Keratinocyte (primary cell): ENCODE measurements at regions of chr5 and their contacts with region 1.

Region 1: DNA sequence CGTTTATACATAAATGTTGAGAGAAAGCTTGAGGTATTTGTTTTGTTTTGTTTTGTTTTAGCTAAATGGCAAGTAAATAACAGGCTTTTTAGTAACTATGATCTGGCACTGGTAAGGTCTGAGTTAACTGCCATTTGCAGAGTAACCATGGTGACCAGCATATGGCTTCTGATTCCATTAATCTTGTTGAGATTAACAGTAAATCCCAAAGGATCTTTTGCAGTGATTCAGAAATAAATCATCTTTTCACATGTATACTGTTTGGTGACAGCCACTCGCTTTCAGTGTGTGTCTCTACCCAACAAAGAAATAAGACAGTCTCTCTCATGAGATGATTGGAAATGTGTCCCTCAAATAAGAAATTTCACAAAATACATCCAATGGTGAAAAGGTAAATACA is 235.6 kb downstream of the RAB3C start:
- DNase-seq: no peak
- H3K4me3 ChIP-seq: no peak overlapping the region
- H3K27ac ChIP-seq: no peak overlapping the region
- H3K4me1 ChIP-seq: no peaks in the 10 kb centered on the region
- H3K27me3 ChIP-seq: no peaks in the 10 kb centered on the region
- CTCF ChIP-seq: no peak

Region 2: DNA sequence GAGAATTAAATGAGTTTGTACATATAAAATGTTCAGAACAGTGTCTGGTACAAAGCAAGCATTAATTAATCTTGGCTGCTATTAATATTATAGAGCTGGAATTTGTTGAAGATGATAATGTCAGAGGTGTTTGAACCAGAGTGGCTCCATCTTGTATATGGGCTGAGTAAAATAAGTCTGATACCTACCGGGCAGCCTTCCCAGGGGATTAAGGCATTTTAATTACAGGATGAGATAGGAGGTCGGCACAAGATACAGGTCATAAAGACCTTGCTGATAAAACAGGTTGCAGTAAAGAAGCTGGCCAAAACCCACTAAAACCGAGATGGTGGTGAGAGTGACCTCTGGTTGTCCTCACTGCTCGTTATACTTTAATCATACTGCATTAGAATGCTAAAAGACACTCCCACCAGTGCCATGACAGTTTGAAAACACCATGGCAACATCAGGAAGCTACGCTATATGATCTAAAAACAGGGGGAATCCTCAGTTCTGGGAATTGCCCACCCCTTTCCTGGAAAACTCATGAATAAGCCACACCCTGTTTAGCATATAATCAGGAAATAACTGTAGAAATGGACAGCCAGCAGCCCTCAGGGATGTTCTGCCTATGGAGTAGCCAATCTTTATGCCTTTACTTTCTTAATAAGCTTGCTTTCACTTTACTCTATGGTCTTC is 448.8 kb before region 1 on chr5:
- dilution Hi-C with region 1: no loop called
- DNase-seq: no peak
- H3K4me3 ChIP-seq: no peak overlapping the region
- H3K27ac ChIP-seq: no peak overlapping the region
- H3K4me1 ChIP-seq: no peaks in the 10 kb centered on the region
- H3K27me3 ChIP-seq: no peaks in the 10 kb centered on the region
- CTCF ChIP-seq: no peak

Region 3: GRCh38 chr5:58505971-58506640 is 312.4 kb before region 1 on chr5:
- dilution Hi-C with region 1: loop called (anchors 25 kb)
- DNase-seq: no peak
- H3K4me3 ChIP-seq: no peak overlapping the region
- H3K27ac ChIP-seq: no peak overlapping the region
- H3K4me1 ChIP-seq: no peaks in the 10 kb centered on the region
- H3K27me3 ChIP-seq: peaks cover 14% of the 10 kb centered on the region
- CTCF ChIP-seq: no peak